Activated B cell treated with CpG ODN at 0.5 μM for 24 hours (primary cell): ENCODE measurements at regions of chr15 and their contacts with region 1.

Region 1: GRCh38 chr15:85730001-85730820 is 64.5 kb downstream of the KLHL25 start:
- DNase-seq: no peak
- ATAC-seq: peak; percentile 82
- H3K4me3 Mint-ChIP-seq: no peak overlapping the region
- H3K27ac Mint-ChIP-seq: peak overlapping the region; percentile 50
- H3K4me1 Mint-ChIP-seq: no peaks in the 10 kb centered on the region
- H3K27me3 Mint-ChIP-seq: no peaks in the 10 kb centered on the region
- CTCF ChIP-seq: no peak

Region 2: GRCh38 chr15:85618956-85619491 is 111.2 kb before region 1 on chr15:
- CTCF ChIA-PET with region 1: interaction called, 3 read pairs
- POLR2A ChIA-PET with region 1: no interaction called
- intact Hi-C with region 1: loop called (anchors 5 kb)
- DNase-seq: no peak
- ATAC-seq: peak; percentile 33
- H3K4me3 Mint-ChIP-seq: no peak overlapping the region
- H3K27ac Mint-ChIP-seq: no peak overlapping the region
- H3K4me1 Mint-ChIP-seq: peaks cover 33% of the 10 kb centered on the region
- H3K27me3 Mint-ChIP-seq: no peaks in the 10 kb centered on the region
- CTCF ChIP-seq: no peak

Region 3: DNA sequence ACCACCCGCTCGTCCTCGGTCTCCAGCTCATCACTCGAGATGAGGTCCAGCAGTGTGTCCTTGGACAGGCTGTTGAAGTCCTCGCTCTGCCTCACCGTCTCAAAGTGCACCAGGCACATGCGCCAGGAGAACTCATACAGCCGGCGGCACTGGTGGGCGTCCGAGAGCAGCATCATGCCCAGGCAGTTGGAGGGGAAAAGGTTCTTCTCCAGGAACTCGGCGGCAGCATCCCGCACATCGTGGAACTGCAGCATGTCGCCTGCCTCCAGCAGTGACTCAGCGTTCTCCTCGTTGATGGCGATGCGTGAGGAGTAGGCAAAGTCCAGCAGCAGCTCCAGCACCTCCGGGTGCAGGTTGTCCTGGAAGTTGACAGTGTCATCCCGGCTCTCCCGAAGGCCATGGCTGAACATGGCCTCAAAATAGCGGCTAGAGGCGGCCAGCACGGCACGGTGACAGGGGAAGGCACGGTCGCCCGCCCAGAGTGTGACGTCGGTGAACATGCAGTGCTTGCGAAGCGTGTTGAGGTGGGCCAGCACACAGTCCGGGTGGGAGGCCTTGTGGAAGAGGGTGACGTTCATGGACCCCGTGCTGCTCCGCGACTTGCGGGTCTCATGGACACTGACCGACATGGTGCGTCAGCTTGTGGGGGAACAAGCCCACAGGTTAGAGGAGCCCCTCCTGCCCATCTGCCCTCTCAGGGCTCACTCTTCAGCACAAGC is 39.1 kb after region 1 on chr15:
- CTCF ChIA-PET with region 1: no interaction called
- POLR2A ChIA-PET with region 1: interaction called, 13 read pairs
- intact Hi-C with region 1: no loop called
- DNase-seq: no peak
- ATAC-seq: no peak
- H3K4me3 Mint-ChIP-seq: no peak overlapping the region
- H3K27ac Mint-ChIP-seq: no peak overlapping the region
- H3K4me1 Mint-ChIP-seq: no peaks in the 10 kb centered on the region
- H3K27me3 Mint-ChIP-seq: no peaks in the 10 kb centered on the region
- CTCF ChIP-seq: no peak

Region 4: DNA sequence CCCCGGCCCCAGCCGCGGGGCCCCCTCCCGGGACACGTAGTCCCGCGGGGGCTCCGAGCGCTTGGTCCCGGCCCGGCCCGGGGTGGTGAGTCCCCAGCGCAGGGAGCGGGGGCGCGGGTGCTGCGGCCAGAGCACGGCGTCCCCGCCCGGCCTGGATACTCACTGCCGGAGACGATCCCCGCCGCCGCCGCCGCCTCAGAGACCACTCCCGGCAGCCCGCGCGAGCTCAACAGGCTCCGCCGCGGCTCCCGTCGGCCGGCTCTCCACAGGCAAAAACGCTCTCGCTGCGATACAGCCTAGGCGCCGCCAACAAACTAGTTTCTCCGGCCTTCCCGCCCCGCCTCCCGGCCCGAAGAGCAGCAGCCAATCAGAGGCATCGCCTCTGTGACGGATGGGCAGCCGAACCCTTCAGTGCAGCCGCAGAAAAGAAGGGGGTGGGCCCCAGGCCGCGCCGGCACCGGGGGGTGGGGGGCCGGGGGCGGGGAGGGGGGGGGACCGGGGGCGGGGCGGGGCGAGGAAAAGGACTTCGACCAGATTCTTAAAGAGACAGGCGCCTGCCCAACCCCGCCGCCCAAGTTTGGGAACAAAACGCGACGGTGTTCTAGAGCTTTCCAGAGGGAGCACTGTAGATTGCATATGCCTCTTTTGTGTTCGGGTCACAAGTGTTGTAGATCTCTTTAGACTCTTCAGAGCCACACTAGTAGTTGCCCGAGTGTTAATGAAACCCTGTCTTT is 64.6 kb after region 1 on chr15 and contains the start of gene KLHL25:
- CTCF ChIA-PET with region 1: no interaction called
- POLR2A ChIA-PET with region 1: no interaction called
- intact Hi-C with region 1: loop called (anchors 5 kb)
- DNase-seq: peak; percentile 84
- ATAC-seq: peak; percentile 98
- H3K4me3 Mint-ChIP-seq: peak within 1 kb of the TSS; percentile 88
- H3K27ac Mint-ChIP-seq: peak within 1 kb of the TSS; percentile 66
- H3K4me1 Mint-ChIP-seq: peaks cover 19% of the 10 kb centered on the region
- H3K27me3 Mint-ChIP-seq: peaks cover 2% of the 10 kb centered on the region
- CTCF ChIP-seq: no peak
- total RNA-seq, gene KLHL25: 2.0 and 2.1 TPM in 2 replicates

Region 5: GRCh38 chr15:85840065-85840801 is 110.0 kb after region 1 on chr15:
- CTCF ChIA-PET with region 1: interaction called, 23 read pairs
- POLR2A ChIA-PET with region 1: no interaction called
- intact Hi-C with region 1: loop called (anchors 1 kb)
- DNase-seq: peak; percentile 75
- ATAC-seq: peak; percentile 97
- H3K4me3 Mint-ChIP-seq: peak overlapping the region; percentile 71
- H3K27ac Mint-ChIP-seq: no peak overlapping the region
- H3K4me1 Mint-ChIP-seq: peaks cover 5% of the 10 kb centered on the region
- H3K27me3 Mint-ChIP-seq: peaks cover 11% of the 10 kb centered on the region
- CTCF ChIP-seq: peak; percentile 64